ENCODE measurements at regions of chr2 and their contacts with region 1.

Region 1: DNA sequence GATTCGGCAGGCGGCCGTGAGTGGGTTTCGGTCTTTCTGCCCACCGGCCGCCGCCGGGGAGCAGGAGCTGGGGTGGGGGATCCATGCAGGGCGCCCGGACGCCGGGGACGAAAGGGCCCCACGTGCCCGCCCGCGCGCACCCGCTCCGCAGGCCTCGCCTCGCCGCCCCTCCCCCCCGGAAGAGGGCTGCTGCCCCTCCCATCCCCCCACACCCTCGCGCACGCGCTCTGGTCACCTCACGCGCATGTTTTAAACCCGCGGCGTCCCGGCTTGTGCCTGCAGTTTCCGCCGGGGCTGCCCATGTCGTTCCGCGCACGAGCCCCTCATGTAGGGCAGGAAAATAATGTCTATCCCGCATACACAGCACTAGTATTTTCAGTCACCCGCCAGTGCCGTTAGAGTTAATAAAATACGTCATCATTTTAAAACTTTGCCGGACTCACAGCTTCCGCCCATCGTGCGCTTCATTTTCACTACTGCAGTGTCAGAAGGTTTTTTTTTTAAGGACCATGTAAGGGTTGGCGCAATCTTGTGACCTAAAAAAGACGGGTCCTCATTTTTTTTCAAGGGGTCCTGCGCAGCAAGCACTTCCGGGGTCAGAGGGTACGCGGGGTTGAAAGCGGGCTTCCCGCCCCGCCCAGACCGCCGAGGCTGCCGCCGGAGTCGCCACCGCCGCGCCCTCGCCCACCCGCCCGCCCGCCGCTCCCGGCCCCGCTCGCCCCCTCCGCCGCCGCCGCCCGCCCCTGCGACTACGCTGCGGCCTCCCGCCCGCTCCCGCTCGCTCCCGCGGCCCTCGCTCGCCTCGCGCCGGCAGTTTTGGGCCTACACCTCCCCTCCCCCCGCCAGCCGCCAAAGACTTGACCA is at the start of gene PCBP1:
- DNase-seq: peak; percentile 84
- ATAC-seq: peak; percentile 25
- H3K4me3 ChIP-seq: peak within 1 kb of the TSS; percentile 92
- H3K27ac ChIP-seq: peak within 1 kb of the TSS; percentile 100
- H3K4me1 ChIP-seq: peaks cover 35% of the 10 kb centered on the region
- H3K27me3 ChIP-seq: no peaks in the 10 kb centered on the region
- CTCF ChIP-seq: no peak
- EP300 ChIP-seq: peak in 1 of 2 experiments; percentile 10; a peak in 1 of 4 replicates
- POLR2A ChIP-seq: no peak
- RAD21 ChIP-seq: 0 out of 2 replicates have a peak, but pooled peaks have one; percentile 0
- polyA plus RNA-seq, gene PCBP1: 24.4 to 28.9 TPM

Region 2: GRCh38 chr2:69741619-69742466 is 345.2 kb before region 1 on chr2 and contains the start of gene ANXA4:
- CTCF ChIA-PET with region 1: no interaction called
- POLR2A ChIA-PET with region 1: no interaction called
- RAD21 ChIA-PET with region 1: interaction called, 11 read pairs
- SMC1A ChIA-PET with region 1: no interaction called
- in situ Hi-C with region 1: no loop called
- intact Hi-C with region 1: no loop called
- DNase-seq: no peak
- ATAC-seq: peak; percentile 91
- H3K4me3 ChIP-seq: peak within 1 kb of the TSS; percentile 71
- H3K27ac ChIP-seq: peak within 1 kb of the TSS; percentile 95
- H3K4me1 ChIP-seq: peaks cover 6% of the 10 kb centered on the region
- H3K27me3 ChIP-seq: no peaks in the 10 kb centered on the region
- CTCF ChIP-seq: no peak
- EP300 ChIP-seq: peak in 1 of 2 experiments; percentile 34; a peak in 1 of 4 replicates
- POLR2A ChIP-seq: peak; percentile 89
- RAD21 ChIP-seq: no peak
- polyA plus RNA-seq, gene ANXA4: 64.6 to 73.1 TPM

Region 3: DNA sequence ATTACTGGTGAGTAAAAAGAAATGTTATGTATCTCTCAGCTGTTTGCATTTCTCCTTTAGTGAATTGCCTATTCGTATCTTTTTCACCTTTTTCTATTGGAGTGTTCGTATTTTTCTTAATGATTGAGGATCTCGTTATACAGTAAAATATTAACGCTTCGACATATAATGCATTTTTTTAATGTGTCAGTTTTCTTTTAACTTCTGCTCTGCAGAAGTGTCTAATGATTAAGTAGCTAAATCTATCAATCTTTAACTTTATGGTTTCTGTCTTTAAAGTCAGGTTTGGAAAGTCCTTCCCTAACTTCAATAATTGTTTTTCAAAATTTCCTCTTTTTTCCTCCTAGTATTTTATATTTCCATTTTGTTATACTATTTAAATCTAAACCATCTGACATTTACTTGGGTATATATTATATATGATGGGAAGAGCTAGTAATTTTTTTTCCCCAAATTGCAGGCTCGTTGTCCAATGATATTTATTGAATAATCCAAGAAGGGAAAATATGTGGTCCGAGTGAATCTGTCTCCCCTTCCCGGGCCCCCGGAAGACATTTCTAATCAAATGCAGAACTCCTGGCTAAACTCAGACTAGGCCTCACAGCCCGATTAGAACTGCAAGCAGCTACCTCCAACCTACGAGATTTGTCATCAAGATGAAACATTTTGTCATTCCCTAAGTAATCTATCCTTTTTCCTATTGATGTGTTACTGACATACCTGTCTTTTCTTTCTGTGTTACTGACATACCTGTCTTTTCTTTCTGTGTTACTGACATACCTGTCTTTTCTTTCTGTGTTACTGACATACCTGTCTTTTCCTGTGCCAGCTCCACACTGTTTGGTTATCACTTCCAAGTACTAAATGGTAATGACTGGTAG is 17.4 kb after region 1 on chr2:
- CTCF ChIA-PET with region 1: interaction called, 25 read pairs
- POLR2A ChIA-PET with region 1: interaction called, 138 read pairs
- RAD21 ChIA-PET with region 1: interaction called, 47 read pairs
- SMC1A ChIA-PET with region 1: interaction called, 80 read pairs
- in situ Hi-C with region 1: no loop called
- intact Hi-C with region 1: loop called (anchors 2 kb)
- DNase-seq: no peak
- ATAC-seq: peak; percentile 17; the same call in 2 of the 3 replicates
- H3K4me3 ChIP-seq: peak overlapping the region; percentile 53
- H3K27ac ChIP-seq: peak overlapping the region; percentile 97
- H3K4me1 ChIP-seq: peaks cover 38% of the 10 kb centered on the region
- H3K27me3 ChIP-seq: no peaks in the 10 kb centered on the region
- CTCF ChIP-seq: no peak
- EP300 ChIP-seq: no peak
- POLR2A ChIP-seq: no peak
- RAD21 ChIP-seq: 0 out of 2 replicates have a peak, but pooled peaks have one; percentile 3

Region 4: DNA sequence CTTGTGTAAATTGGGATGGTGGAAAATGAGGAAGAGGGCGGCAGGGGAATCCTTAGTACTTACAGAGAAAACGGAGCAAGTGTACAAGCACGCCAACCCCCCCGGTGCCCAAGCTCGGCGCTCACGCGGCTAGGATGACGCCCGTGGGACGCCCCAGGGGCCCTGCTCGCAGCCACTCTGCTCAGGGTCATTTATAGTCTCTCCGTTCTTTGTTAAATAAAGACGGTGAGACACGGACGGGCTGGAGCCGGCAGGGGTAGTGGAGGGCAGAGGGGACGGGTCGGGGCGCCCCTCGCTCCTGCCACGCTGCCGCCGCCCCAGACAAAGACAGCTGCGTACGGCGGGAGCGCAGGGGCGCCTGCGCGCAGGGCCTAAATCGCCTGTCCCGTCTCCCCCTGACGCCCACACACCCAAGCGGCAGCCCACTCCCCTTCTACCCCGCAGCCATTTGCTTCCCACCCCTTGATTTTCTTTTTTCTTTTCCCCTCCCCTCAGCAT is 38.0 kb after region 1 on chr2:
- CTCF ChIA-PET with region 1: interaction called, 8 read pairs
- POLR2A ChIA-PET with region 1: interaction called, 187 read pairs
- RAD21 ChIA-PET with region 1: interaction called, 56 read pairs
- SMC1A ChIA-PET with region 1: interaction called, 52 read pairs
- in situ Hi-C with region 1: no loop called
- intact Hi-C with region 1: loop called (anchors 1 kb)
- DNase-seq: no peak
- ATAC-seq: peak; percentile 61
- H3K4me3 ChIP-seq: peak overlapping the region; percentile 67
- H3K27ac ChIP-seq: peak overlapping the region; percentile 95
- H3K4me1 ChIP-seq: peaks cover 62% of the 10 kb centered on the region
- H3K27me3 ChIP-seq: no peaks in the 10 kb centered on the region
- CTCF ChIP-seq: no peak
- EP300 ChIP-seq: no peak; a peak in 1 of 4 replicates
- POLR2A ChIP-seq: peak; percentile 88
- RAD21 ChIP-seq: no peak

Region 5: DNA sequence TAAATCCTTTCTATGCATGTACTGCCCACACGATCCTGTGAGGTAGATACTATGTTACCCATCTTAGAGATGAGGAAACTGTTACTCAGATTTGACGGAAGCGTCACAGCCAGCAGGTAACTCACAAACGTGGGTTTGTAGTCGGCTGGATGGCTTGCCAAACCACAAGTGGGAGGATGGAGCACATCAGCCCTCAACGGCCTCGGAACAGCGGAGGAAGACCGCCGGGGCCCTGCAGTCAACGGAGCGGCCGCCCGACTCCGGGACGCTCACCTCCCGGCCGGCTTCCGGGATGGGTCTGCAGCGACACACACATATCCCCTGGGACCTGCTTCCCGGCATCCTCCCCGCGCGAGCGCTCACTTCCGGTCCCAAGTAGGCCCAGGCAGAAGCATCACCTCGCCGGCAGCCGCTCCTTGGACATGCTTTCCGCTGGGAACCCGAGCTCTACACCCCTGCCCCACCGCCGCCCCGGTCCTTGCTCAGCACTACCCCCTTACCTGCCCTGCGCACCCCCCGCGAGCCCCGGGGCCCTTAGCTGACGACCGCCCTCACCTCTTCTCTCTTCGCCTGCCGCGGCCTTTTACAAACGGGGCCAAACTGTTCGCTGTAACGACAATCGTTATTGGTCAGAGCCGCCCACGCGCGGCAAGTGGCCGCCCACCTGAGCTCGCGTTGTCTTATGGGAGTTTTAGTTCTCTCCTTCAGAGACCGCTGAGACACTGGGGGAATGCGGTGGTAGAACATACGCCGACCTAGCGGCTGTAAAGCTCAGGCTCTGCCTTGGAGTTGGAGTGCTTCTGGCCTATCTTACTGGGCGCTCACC is 103.6 kb after region 1 on chr2 and contains the start of gene C2orf42:
- CTCF ChIA-PET with region 1: no interaction called
- POLR2A ChIA-PET with region 1: interaction called, 4 read pairs
- RAD21 ChIA-PET with region 1: interaction called, 4 read pairs
- SMC1A ChIA-PET with region 1: interaction called, 7 read pairs
- in situ Hi-C with region 1: no loop called
- intact Hi-C with region 1: loop called (anchors 2 kb)
- DNase-seq: peak; percentile 97
- ATAC-seq: peak; percentile 94
- H3K4me3 ChIP-seq: peak within 1 kb of the TSS; percentile 72
- H3K27ac ChIP-seq: peak within 1 kb of the TSS; percentile 88
- H3K4me1 ChIP-seq: no peaks in the 10 kb centered on the region; the same call in 1 of the 2 replicates
- H3K27me3 ChIP-seq: no peaks in the 10 kb centered on the region
- CTCF ChIP-seq: peak; percentile 1 to 14 (median 7); a peak in 2 of 6 replicates
- EP300 ChIP-seq: peak in 1 of 2 experiments; percentile 12; a peak in 1 of 4 replicates
- POLR2A ChIP-seq: peak; percentile 95
- RAD21 ChIP-seq: 0 out of 2 replicates have a peak, but pooled peaks have one; percentile 15
- polyA plus RNA-seq, gene C2orf42: 5.5 to 7.3 TPM

Region 6: DNA sequence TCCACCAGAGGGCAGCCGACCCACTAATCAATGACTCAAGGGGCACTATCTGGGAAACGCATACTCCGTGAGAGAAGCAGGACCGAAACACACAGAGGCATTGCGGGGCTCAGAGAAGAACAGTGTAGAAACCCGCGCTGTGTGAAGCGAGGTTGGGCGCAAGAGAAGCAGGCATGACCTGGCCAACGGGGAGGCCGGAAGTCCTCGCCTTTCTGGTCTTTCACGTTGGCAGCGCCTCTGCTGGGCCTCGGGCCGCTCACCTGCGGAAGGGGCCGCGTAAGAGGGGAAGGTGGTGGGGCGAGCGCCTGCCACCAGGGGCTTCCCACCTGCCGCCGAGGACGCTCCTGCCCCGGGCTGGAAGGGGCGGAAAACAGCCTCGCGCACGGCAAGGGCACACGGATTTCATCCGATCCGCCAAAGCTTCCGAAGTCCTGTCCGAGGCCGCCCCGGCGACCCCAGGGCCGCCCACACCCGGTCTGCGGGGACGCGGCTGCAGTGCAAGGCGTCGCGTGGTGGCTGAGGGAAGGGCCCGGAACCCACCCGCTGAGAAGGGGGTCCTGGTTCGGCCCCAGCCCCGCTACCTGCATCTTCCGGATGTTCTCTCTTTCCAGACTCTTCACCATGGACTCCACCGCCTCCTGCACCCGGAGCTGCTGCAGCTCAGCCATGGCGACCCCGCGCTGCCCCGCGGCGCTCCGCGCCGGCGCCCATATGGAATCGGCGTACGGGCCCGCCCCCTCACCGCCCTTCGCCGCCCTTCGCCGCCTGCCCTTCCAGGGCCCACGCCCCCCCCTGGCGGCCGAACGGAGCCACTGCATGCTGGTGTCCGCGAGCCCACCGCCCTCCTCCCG is 214.5 kb after region 1 on chr2 and contains the start of gene FAM136A:
- CTCF ChIA-PET with region 1: interaction called, 3 read pairs
- POLR2A ChIA-PET with region 1: interaction called, 3 read pairs
- RAD21 ChIA-PET with region 1: no interaction called
- SMC1A ChIA-PET with region 1: no interaction called
- in situ Hi-C with region 1: no loop called
- intact Hi-C with region 1: loop called (anchors 5 kb)
- DNase-seq: peak; percentile 40
- ATAC-seq: peak; percentile 93
- H3K4me3 ChIP-seq: peak within 1 kb of the TSS; percentile 84
- H3K27ac ChIP-seq: peak within 1 kb of the TSS; percentile 85
- H3K4me1 ChIP-seq: peaks cover 3% of the 10 kb centered on the region; the same call in 1 of the 2 replicates
- H3K27me3 ChIP-seq: no peaks in the 10 kb centered on the region
- CTCF ChIP-seq: peak; percentile 88 to 97 (median 95)
- EP300 ChIP-seq: no peak
- POLR2A ChIP-seq: peak; percentile 82
- RAD21 ChIP-seq: peak; percentile 70
- polyA plus RNA-seq, gene FAM136A: 128 to 134 TPM

Region 7: GRCh38 chr2:71049365-71050360 is 962.6 kb after region 1 on chr2:
- CTCF ChIA-PET with region 1: no interaction called
- POLR2A ChIA-PET with region 1: no interaction called
- RAD21 ChIA-PET with region 1: no interaction called
- SMC1A ChIA-PET with region 1: no interaction called
- in situ Hi-C with region 1: no loop called
- intact Hi-C with region 1: no loop called
- DNase-seq: no peak
- ATAC-seq: peak; percentile 90
- H3K4me3 ChIP-seq: no peak overlapping the region
- H3K27ac ChIP-seq: no peak overlapping the region
- H3K4me1 ChIP-seq: peaks cover 4% of the 10 kb centered on the region; the same call in 1 of the 2 replicates
- H3K27me3 ChIP-seq: no peaks in the 10 kb centered on the region
- CTCF ChIP-seq: peak; percentile 32 to 55 (median 35); a peak in 5 of 6 replicates
- EP300 ChIP-seq: no peak
- POLR2A ChIP-seq: no peak
- RAD21 ChIP-seq: peak; percentile 73